Activated naive CD4-positive, alpha-beta T cell treated with anti-CD3 and anti-CD28 coated beads for 36 hours (primary cell): ENCODE measurements at regions of chr17 and their contacts with region 1.

Region 1: GRCh38 chr17:67993596-67994361 is 2.5 kb downstream of the C17orf58 start:
- DNase-seq: peak; percentile 67
- H3K4me3 Mint-ChIP-seq: peak overlapping the region; percentile 78
- H3K27ac Mint-ChIP-seq: peak overlapping the region; percentile 78
- H3K4me1 Mint-ChIP-seq: peaks cover 30% of the 10 kb centered on the region
- H3K27me3 Mint-ChIP-seq: peaks cover 17% of the 10 kb centered on the region

Region 2: DNA sequence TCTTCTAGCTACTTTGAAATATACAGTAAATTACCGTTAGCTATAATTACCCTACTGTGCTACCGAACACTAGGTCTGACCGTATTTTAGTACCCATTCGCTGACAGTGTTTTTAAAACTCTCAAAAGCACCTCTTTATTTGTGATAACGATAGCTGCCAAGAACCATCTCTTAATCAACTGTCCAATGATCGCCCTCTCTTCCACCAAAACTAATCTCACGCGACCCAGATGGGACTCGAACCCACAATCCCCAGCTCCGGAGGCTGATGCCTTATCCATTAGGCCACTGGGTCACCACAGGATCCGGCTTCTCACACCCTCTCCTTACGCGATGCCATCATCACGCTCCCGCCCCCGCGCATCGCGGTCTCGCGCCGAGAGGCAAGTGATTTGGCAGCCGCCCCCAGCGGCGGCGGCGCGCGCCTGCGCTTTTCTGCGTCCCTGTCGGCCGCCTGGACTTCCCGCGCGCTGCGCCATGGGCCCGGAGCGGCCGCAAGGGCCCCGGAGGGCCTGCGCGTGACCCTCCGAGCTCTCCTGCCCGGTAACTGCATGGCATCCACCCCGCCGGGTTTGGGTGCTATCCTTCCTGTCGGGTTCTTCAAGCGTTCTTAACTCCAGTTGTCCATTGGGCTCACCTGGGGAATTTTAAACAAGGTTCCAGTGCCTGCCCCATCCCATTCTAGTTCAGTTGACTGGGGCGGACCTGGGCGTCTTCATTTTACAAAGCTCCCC is 26.1 kb after region 1 on chr17:
- CTCF ChIA-PET with region 1: interaction called, 5 read pairs
- intact Hi-C with region 1: loop called (anchors 1 kb)
- DNase-seq: peak; percentile 99
- H3K4me3 Mint-ChIP-seq: peak overlapping the region; percentile 77
- H3K27ac Mint-ChIP-seq: peak overlapping the region; percentile 94
- H3K4me1 Mint-ChIP-seq: peaks cover 11% of the 10 kb centered on the region
- H3K27me3 Mint-ChIP-seq: peaks cover 2% of the 10 kb centered on the region

Region 3: GRCh38 chr17:68200689-68201417 is 207.1 kb after region 1 on chr17:
- CTCF ChIA-PET with region 1: no interaction called
- intact Hi-C with region 1: no loop called
- DNase-seq: peak; percentile 81
- H3K4me3 Mint-ChIP-seq: peak overlapping the region; percentile 58
- H3K27ac Mint-ChIP-seq: no peak overlapping the region
- H3K4me1 Mint-ChIP-seq: peaks cover 24% of the 10 kb centered on the region
- H3K27me3 Mint-ChIP-seq: peaks cover 26% of the 10 kb centered on the region

Region 4: DNA sequence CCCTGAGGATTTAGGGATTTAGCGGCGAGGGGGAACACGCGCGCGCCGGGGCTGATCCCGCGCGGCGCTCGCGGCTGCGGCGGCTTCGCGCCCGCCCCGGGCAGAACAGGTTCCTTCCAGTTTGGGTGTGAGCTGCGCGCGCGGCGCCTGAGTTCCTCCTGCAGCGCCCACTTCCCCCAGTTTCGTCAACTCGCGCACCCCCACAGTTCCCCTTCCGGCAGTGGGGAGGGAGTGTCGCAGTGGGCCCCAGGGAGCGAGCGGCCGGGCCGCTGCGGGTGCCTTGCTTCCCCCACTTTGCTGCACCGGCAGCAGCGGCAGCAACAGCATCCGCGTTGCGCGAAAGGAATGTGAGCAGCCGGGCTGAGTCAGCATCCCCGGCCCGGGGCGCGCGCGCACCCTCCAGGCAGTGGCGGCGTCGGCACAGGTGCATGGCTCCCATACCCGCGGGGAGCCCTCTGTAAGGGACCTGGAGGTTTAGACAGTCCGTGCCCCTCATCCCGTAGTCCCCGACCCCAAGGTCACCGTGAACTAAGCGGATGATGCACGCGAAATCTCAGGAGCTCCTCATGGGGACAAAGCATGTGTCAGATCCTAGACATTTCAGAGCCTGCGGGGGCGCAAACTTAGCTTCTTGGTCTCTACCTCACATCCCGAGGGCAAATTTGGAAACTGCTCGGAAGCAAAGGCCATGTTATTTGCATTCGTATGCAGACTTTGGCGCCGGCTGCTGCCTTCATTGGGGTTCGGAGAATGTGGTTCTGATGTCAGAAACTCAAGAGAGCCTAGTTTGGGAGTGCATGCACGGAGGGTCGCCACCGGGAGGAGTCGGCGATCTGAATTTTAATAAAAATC is 298.3 kb after region 1 on chr17:
- CTCF ChIA-PET with region 1: no interaction called
- intact Hi-C with region 1: no loop called
- DNase-seq: peak; percentile 85
- H3K4me3 Mint-ChIP-seq: peak overlapping the region; percentile 81
- H3K27ac Mint-ChIP-seq: peak overlapping the region; percentile 84
- H3K4me1 Mint-ChIP-seq: peaks cover 57% of the 10 kb centered on the region
- H3K27me3 Mint-ChIP-seq: no peaks in the 10 kb centered on the region

Region 5: DNA sequence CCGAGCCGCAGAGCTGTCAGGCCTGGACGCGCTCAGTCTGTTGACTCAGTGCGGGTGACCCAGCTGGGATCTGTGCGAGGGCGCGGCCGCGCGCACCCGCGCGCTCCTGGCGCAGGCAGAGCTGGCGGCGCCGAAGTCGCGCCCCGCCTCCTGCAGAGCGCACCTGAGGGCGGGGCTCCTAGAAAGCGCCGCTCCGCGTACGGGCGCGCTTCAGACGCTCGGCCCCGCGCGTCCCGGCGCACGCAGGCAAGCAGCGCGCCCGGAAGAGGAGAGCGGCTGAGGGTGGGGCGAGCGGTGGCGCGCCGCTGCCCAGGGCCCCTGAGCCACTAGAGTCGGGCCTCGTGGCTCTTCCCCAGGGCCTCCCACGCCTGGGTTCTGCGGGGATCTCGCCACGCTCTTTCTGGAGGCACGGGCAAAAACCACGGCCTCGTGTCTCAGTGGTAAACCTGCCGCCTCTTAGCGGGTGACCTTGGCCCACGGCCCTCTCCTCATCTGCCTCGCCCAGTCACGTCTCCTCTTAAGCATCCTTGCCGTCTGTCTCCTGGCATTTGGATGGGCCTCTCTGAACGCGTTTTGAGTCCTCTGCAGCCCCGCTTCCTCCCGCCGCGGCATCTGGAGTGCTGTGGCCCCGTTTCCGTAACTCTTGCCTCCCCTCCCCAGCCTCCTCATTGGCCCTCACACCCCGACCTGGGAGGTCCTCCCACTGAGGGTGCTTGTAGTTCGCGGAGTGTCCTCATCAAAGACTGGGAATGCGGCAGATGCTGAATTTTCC is 1333.5 kb after region 1 on chr17 and contains the start of gene ABCA5:
- CTCF ChIA-PET with region 1: no interaction called
- intact Hi-C with region 1: loop called (anchors 2 kb)
- DNase-seq: peak; percentile 92
- H3K4me3 Mint-ChIP-seq: peak within 1 kb of the TSS; percentile 93
- H3K27ac Mint-ChIP-seq: peak within 1 kb of the TSS; percentile 95
- H3K4me1 Mint-ChIP-seq: peaks cover 31% of the 10 kb centered on the region
- H3K27me3 Mint-ChIP-seq: peaks cover 2% of the 10 kb centered on the region
- total RNA-seq, gene ABCA5: 14.3 to 15.1 TPM